Right ventricle myocardium inferior (tissue), 1 donor: ENCODE measurements at regions of chr20 and their contacts with region 1.

Region 1: GRCh38 chr20:8790442-8791074 is 278.3 kb upstream of the PLCB4 start:
- DNase-seq: no peak
- ATAC-seq: peak; percentile 23

Region 2: DNA sequence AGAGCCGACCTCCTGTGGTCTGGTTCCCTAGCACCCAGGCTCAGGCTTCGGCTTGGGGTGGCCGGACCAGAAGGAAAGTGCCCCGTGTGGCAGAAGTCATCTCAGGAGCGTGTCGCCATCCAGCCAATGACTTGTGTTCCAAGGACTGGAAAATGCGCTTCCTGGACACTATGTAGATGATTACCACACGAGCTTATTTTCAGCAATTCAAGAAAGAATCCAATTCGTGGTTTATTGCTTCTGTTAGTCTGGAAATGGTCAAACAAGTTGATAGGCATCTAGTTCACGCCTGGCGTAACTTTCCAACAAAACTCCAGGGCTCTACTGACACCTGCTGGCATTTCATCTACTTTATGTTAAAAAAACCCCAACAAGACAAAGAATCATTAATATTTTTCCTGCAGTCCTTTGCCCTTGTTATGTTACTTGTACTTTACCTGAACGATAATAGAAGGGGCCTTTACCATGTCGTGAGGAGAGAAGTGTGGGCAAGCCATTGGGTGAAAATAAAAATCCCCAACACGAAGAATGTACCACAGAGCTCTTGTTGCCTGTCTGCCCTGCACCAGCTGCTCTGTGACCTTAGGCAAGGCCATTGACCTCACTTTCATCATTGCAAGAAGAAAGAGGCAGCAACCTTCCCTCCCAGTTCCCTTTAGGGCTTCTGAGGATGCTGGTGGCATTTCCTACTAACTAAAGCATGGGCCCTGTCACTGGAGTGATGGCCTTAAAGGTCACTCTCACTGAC is 569.2 kb after region 1 on chr20:
- intact Hi-C with region 1: loop called (anchors 1 kb)
- DNase-seq: no peak
- ATAC-seq: peak; percentile 46

Region 3: DNA sequence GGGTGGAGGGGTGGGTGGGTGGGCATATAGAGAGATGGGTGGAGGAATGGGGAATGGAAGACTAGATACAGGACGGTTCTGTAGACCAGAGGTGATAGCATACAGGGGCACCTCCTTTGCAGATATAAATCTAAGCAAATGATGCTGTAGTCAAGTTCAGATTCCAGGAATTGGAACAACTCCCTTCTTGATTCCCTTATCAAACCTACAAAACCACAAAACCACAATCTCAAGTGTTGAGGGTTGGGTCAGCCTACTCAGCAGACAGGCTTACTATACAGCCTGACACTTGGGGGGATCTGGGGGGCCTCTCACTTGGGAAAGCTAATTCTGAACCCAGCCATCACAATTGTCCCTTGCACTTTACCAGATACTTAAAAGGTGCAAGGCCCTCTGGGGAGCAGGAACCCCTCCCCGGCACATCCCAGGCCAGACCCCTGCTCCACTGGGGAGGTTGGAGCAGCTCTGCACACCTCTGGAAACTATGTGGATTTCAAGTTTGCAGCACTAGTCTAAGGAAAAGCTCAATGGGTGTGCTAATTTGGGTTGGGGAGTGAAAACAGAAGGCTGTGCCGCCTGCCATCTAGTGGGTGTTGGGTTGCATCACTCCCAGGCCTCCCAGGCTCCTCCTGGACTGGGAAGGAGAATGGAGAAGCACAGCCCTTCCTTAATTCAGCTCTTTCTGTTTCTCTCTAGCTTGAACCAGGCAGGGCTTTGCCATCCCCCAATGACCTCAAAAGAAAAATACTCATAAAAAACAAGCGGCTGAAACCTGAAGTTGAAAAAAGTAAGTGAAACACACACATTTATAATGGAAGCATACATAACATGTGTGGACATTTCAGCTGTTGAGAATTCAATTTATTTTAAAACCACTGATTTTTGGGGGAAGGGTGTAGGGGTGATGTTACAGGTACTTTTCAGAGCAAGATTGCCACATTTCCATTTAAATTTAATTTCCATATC is 602.6 kb after region 1 on chr20:
- intact Hi-C with region 1: loop called (anchors 2 kb)
- DNase-seq: peak; percentile 82
- ATAC-seq: peak; percentile 81